ENCODE measurements at regions of chr14 and their contacts with region 1.

Region 1: DNA sequence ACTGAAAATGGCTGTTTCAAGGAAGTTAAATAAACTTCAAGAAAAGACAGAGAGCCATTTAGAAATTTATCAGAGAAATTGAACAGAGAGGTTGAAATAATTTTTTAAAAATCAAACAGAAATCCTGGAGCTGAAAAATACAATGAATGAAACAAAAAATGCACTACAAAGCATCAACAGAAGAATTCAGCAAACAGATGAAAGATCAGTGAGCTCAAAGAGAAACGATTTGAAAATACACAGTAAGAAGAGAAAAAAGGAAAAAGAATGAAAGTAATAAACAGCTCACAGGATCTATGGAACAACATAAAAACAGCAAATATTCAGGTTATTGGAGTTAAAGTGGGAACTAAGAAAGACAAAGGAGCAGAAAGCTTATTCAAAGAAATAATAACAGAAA is 26.2 kb downstream of the COX16 start:
- DNase-seq: no peak
- H3K4me3 ChIP-seq: no peak overlapping the region
- H3K27ac ChIP-seq: no peak overlapping the region
- H3K4me1 ChIP-seq: no peaks in the 10 kb centered on the region
- H3K27me3 ChIP-seq: no peaks in the 10 kb centered on the region
- CTCF ChIP-seq: no peak
- POLR2A ChIP-seq: no peak

Region 2: GRCh38 chr14:69928111-69928523 is 405.2 kb before region 1 on chr14:
- intact Hi-C with region 1: loop called (anchors 5 kb)
- DNase-seq: no peak
- H3K4me3 ChIP-seq: no peak overlapping the region
- H3K27ac ChIP-seq: no peak overlapping the region
- H3K4me1 ChIP-seq: no peaks in the 10 kb centered on the region
- H3K27me3 ChIP-seq: no peaks in the 10 kb centered on the region
- CTCF ChIP-seq: no peak
- POLR2A ChIP-seq: no peak

Region 3: GRCh38 chr14:70292716-70293115 is 40.6 kb before region 1 on chr14:
- intact Hi-C with region 1: no loop called
- DNase-seq: no peak
- H3K4me3 ChIP-seq: no peak overlapping the region
- H3K27ac ChIP-seq: no peak overlapping the region
- H3K4me1 ChIP-seq: no peaks in the 10 kb centered on the region
- H3K27me3 ChIP-seq: no peaks in the 10 kb centered on the region
- CTCF ChIP-seq: no peak
- POLR2A ChIP-seq: no peak

Region 4: DNA sequence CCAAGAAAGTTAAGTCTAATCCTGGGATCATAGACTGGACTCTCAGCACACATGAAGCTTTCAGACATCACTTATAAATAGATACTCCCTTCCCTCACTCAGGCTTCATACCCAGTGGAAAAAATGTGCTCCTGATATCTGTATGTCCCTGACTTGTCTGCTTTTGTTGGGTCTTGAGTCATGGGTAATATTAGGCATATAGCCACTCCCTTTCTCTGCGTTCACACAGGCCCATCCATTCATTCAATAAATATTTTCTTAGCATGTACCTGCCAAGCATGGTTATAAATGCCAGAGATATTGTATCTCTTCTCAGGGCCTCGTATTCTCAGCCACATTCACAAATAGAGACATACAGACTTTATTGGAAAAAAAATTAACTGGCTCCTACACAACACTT is 17.3 kb before region 1 on chr14:
- intact Hi-C with region 1: loop called (anchors 2 kb)
- DNase-seq: no peak
- H3K4me3 ChIP-seq: no peak overlapping the region
- H3K27ac ChIP-seq: no peak overlapping the region
- H3K4me1 ChIP-seq: no peaks in the 10 kb centered on the region
- H3K27me3 ChIP-seq: no peaks in the 10 kb centered on the region
- CTCF ChIP-seq: no peak
- POLR2A ChIP-seq: no peak